ENCODE measurements at regions of chr1 and their contacts with region 1.

Region 1: DNA sequence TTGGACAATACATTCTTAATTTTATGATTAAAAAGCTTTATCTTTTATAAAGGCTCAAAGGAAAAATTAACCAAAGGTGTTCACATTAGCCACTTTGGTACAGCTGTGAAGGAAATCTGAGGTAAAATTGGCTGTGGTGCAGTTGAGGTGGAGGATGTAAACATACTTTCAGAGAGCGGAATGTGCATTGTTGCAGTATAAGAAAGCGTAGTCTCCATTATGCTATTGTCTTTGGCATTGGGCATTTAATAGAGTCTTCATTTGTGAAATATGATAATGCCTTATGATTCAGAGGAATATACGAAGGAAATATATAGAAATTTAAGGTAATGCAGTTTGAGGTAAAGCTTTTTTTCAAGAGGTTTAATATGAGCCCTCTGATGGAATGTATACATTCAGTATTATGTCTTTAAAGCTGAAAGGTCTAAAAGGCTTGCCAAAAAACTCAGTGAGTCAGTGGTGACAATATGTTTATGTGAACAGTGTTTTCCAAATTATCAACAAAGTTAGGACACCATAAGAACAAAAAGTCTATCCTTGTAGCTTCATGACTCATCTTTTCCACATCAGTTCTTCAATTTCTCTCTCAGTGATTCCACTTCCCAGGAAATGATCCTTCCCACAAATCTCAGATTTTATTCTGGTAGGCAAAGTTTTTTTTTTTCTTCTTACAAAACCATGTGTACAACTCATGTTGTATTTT is 26.9 kb upstream of the DDR2 start:
- DNase-seq: no peak
- ATAC-seq: no peak
- H3K4me3 ChIP-seq: no peak overlapping the region
- H3K27ac ChIP-seq: peak overlapping the region in 1 of 4 donors; percentile 11
- H3K4me1 ChIP-seq: no peaks in the 10 kb centered on the region
- H3K27me3 ChIP-seq: no peaks in the 10 kb centered on the region
- CTCF ChIP-seq: no peak
- POLR2A ChIP-seq: no peak

Region 2: GRCh38 chr1:162779043-162779442 is 173.7 kb after region 1 on chr1:
- in situ Hi-C with region 1: loop called in 1 of 4 experiments (anchors 25 kb)
- intact Hi-C with region 1: no loop called
- DNase-seq: no peak
- ATAC-seq: no peak
- H3K4me3 ChIP-seq: no peak overlapping the region
- H3K27ac ChIP-seq: no peak overlapping the region
- H3K4me1 ChIP-seq: no peaks in the 10 kb centered on the region
- H3K27me3 ChIP-seq: no peaks in the 10 kb centered on the region
- CTCF ChIP-seq: no peak
- POLR2A ChIP-seq: no peak